A549 (cell line): ENCODE measurements at regions of chr10 and their contacts with region 1.

Region 1: DNA sequence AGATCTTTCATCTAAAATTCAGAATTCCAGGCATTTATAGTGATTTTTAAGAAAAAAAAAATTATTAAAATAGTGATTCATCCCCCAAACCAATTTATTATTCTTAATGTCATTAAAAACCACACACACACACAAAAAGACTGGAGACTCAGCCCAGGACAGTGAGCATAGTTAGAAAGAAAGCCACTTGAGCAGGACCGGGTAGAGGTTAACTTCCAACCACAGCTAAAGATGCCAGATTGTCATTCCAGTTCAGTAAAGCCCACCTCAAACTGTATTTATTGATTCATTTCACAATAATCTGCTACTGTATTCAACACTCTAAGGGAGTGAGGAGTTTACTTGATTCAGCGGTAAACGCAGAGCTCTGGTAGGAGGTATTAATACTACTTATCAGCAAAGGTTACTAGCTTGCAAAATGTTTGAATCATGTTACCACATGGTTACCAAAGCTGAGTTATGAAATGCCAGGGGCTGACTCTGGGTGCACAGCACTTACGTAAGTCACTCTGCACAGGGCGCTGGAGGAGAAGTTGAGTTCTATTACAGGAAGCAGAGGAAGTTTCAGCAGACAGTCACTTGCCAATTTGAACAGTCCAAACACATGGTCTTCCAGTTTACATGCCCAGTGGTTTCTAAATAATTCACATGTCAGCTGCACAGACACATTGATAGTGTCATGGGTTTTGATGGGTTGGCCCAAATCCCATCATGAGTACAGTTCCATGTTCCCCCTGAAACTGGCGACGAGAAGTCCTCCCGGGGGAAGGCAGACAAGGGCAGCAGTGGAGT is 64.6 kb downstream of the KLF6 start:
- DNase-seq: no peak
- ATAC-seq: 0 out of 6 replicates have a peak, but pooled peaks of 1 of the 2 experiments have one; percentile 47
- H3K4me3 ChIP-seq: no peak overlapping the region
- H3K27ac ChIP-seq: no peak overlapping the region
- H3K4me1 ChIP-seq: 0 out of 3 replicates have a peak, but pooled peaks cover 3% of the 10 kb centered on the region
- CTCF ChIP-seq: no peak
- EP300 ChIP-seq: no peak
- POLR2A ChIP-seq: no peak
- RAD21 ChIP-seq: no peak

Region 2: GRCh38 chr10:3595736-3596135 is 124.7 kb before region 1 on chr10:
- CTCF ChIA-PET with region 1: no interaction called
- POLR2A ChIA-PET with region 1: no interaction called
- DNase-seq: no peak
- ATAC-seq: no peak
- H3K4me3 ChIP-seq: no peak overlapping the region
- H3K27ac ChIP-seq: no peak overlapping the region
- H3K4me1 ChIP-seq: no peaks in the 10 kb centered on the region
- CTCF ChIP-seq: no peak
- EP300 ChIP-seq: no peak
- POLR2A ChIP-seq: no peak
- RAD21 ChIP-seq: no peak

Region 3: DNA sequence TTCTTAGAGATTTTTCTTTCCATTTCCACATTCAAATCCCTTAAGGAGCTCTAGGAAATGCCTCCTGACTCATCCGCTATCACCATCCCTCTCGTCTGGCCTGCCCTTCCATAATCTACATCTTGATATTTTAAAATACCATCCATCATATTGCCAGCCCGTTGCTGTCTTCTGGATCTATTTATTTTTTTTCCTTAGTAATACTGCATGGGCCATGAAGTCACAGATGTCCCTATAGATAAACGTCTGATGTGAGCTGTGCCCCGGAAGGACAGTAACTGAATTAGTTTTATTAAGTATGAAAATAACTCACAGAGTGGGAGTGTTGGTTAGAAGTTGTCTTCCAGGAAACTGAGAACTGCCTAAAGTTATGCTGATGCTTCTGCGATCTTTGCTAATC is 11.6 kb before region 1 on chr10:
- CTCF ChIA-PET with region 1: interaction called, 10 read pairs
- POLR2A ChIA-PET with region 1: no interaction called
- DNase-seq: no peak
- ATAC-seq: no peak
- H3K4me3 ChIP-seq: no peak overlapping the region
- H3K27ac ChIP-seq: no peak overlapping the region
- H3K4me1 ChIP-seq: no peaks in the 10 kb centered on the region
- CTCF ChIP-seq: no peak
- EP300 ChIP-seq: no peak
- POLR2A ChIP-seq: no peak
- RAD21 ChIP-seq: no peak